ENCODE measurements at regions of chr6 and their contacts with region 1.

Region 1: GRCh38 chr6:131615275-131615674 is 12.8 kb downstream of the MED23 start:
- DNase-seq: no peak
- H3K4me3 ChIP-seq: no peak overlapping the region
- H3K27ac ChIP-seq: no peak overlapping the region
- H3K4me1 ChIP-seq: no peaks in the 10 kb centered on the region
- H3K27me3 ChIP-seq: no peaks in the 10 kb centered on the region
- CTCF ChIP-seq: no peak
- POLR2A ChIP-seq: no peak

Region 2: GRCh38 chr6:131597446-131597845 is 17.8 kb before region 1 on chr6:
- CTCF ChIA-PET with region 1: interaction called, 8 read pairs
- POLR2A ChIA-PET with region 1: interaction called, 5 read pairs
- dilution Hi-C with region 1: no loop called
- intact Hi-C with region 1: loop called (anchors 2 kb)
- DNase-seq: no peak
- H3K4me3 ChIP-seq: no peak overlapping the region
- H3K27ac ChIP-seq: no peak overlapping the region
- H3K4me1 ChIP-seq: no peaks in the 10 kb centered on the region
- H3K27me3 ChIP-seq: no peaks in the 10 kb centered on the region
- CTCF ChIP-seq: peak in 1 of 2 donors; percentile 5
- POLR2A ChIP-seq: no peak

Region 3: GRCh38 chr6:131635384-131636340 is 20.4 kb after region 1 on chr6:
- CTCF ChIA-PET with region 1: no interaction called
- POLR2A ChIA-PET with region 1: no interaction called
- dilution Hi-C with region 1: no loop called
- intact Hi-C with region 1: no loop called
- DNase-seq: no peak
- H3K4me3 ChIP-seq: no peak overlapping the region
- H3K27ac ChIP-seq: no peak overlapping the region
- H3K4me1 ChIP-seq: no peaks in the 10 kb centered on the region
- H3K27me3 ChIP-seq: peaks cover 9 to 14% of the 10 kb centered on the region in 2 experiments
- CTCF ChIP-seq: no peak
- POLR2A ChIP-seq: no peak

Region 4: GRCh38 chr6:131900231-131900630 is 285.0 kb after region 1 on chr6:
- CTCF ChIA-PET with region 1: no interaction called
- POLR2A ChIA-PET with region 1: no interaction called
- dilution Hi-C with region 1: no loop called
- intact Hi-C with region 1: no loop called
- DNase-seq: no peak
- H3K4me3 ChIP-seq: no peak overlapping the region
- H3K27ac ChIP-seq: no peak overlapping the region
- H3K4me1 ChIP-seq: no peaks in the 10 kb centered on the region
- H3K27me3 ChIP-seq: peaks cover 0 to 3% of the 10 kb centered on the region in 2 experiments
- CTCF ChIP-seq: no peak
- POLR2A ChIP-seq: no peak

Measured in endothelial cell of umbilical vein (primary cell).